ENCODE measurements at regions of chr1 and their contacts with region 1.

Region 1: DNA sequence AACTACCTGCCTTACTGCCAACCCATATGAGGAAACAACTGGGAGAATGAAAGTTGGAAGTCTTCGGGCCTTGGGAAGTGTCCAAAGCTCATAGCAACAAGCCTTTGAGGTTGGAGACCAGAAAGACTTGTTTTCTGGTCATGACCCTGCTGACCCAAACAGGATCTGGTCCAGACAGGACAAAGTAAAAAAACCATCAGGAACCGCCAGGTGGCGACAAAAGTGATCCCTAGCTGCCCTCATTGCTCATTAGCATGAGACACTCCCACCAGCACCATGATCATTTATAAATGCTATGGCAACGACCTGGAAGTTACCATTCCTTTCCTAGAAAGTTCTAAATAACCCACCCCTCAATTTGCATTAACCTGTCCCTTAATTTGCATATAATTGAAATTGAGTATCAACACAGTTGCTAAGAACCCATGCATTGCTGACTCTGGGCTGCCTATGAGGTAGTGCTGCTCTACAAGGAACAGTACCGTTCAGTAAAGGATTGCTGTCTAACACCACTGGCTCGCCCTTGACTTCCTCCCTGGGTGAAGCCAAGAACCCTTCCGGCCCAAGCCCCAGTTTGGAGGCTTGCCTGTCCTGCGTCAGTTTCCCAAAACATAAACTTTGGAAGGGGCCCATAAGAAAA is 89.0 kb downstream of the URB2 start:
- DNase-seq: no peak
- ATAC-seq: peak; percentile 96
- H3K4me3 ChIP-seq: no peak overlapping the region
- H3K27ac ChIP-seq: no peak overlapping the region
- H3K4me1 ChIP-seq: no peaks in the 10 kb centered on the region
- H3K27me3 ChIP-seq: no peaks in the 10 kb centered on the region; a peak in 1 of 4 replicates
- CTCF ChIP-seq: peak; percentile 56 to 68 (median 62)
- EP300 ChIP-seq: no peak
- POLR2A ChIP-seq: no peak
- RAD21 ChIP-seq: peak; percentile 62

Region 2: DNA sequence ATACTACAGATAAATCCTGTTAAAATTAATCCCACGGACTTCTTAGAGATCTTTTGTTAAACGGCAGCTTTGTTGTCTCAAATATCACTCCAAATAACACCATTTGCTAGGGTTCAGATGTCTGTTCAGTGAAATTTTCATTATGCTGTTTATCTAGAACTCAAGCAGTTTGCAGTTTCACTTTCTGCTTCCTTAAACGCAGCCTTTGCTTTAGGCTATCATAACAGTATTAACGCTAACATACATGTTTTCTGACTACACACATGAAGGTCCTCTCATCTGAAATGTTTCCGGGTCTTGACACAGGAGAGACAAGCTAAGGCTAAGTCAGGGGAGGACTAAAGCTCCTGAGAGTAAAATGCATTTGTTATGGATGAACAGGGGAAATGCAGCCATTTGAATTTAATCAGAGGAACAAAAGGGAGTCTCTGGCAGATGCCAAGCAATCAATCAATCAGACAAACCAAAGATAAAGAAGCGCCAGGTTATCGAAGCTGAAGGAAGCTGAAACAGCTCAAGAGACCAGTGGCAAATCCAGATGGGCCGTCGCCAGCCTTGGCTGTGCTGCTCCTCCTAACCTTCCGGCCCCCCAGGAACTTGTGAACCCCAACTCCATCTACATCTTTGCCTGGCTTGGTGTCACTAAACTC is 389.1 kb before region 1 on chr1:
- CTCF ChIA-PET with region 1: no interaction called
- POLR2A ChIA-PET with region 1: no interaction called
- RAD21 ChIA-PET with region 1: no interaction called
- SMC1A ChIA-PET with region 1: no interaction called
- in situ Hi-C with region 1: no loop called
- intact Hi-C with region 1: no loop called
- DNase-seq: no peak
- ATAC-seq: no peak
- H3K4me3 ChIP-seq: no peak overlapping the region
- H3K27ac ChIP-seq: no peak overlapping the region
- H3K4me1 ChIP-seq: peaks cover 26% of the 10 kb centered on the region
- H3K27me3 ChIP-seq: no peaks in the 10 kb centered on the region
- CTCF ChIP-seq: no peak
- EP300 ChIP-seq: no peak
- POLR2A ChIP-seq: no peak
- RAD21 ChIP-seq: no peak

Region 3: DNA sequence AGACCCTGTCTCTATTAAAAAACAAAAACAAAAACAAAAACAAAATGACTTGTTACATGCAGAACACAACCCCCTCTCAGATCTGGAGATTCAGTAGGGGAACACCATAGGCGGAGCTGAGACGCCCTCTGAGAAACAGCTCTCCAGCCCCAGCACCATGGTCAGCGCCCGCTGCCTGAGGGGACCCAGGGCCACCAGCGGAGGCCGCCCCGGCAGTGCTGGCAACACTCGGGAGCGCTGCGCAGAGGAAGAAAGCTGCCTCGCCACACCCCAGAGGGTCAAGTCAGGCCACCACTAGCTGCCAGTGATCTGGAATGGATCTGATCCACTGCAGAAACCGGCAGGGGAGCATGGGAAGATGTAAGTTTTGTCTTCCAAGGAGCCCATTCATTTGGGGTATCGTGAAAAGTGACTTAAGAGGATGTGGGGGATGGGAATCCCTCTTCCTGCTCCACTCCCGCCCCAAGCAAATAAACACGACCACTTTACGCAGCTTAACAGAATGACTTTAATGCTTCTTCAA is 284.3 kb before region 1 on chr1:
- CTCF ChIA-PET with region 1: no interaction called
- POLR2A ChIA-PET with region 1: no interaction called
- RAD21 ChIA-PET with region 1: no interaction called
- SMC1A ChIA-PET with region 1: no interaction called
- in situ Hi-C with region 1: no loop called
- intact Hi-C with region 1: no loop called
- DNase-seq: no peak
- ATAC-seq: peak; percentile 46; the same call in 1 of the 3 replicates
- H3K4me3 ChIP-seq: no peak overlapping the region
- H3K27ac ChIP-seq: no peak overlapping the region
- H3K4me1 ChIP-seq: no peaks in the 10 kb centered on the region
- H3K27me3 ChIP-seq: peaks cover 13 to 14% of the 10 kb centered on the region in 2 experiments
- CTCF ChIP-seq: no peak
- EP300 ChIP-seq: no peak
- POLR2A ChIP-seq: no peak
- RAD21 ChIP-seq: no peak

Region 4: GRCh38 chr1:229730573-229730972 is 15.5 kb after region 1 on chr1:
- CTCF ChIA-PET with region 1: interaction called, 18 read pairs
- POLR2A ChIA-PET with region 1: no interaction called
- RAD21 ChIA-PET with region 1: no interaction called
- SMC1A ChIA-PET with region 1: interaction called, 6 read pairs
- in situ Hi-C with region 1: no loop called
- intact Hi-C with region 1: no loop called
- DNase-seq: no peak
- ATAC-seq: no peak
- H3K4me3 ChIP-seq: no peak overlapping the region
- H3K27ac ChIP-seq: no peak overlapping the region
- H3K4me1 ChIP-seq: no peaks in the 10 kb centered on the region
- H3K27me3 ChIP-seq: no peaks in the 10 kb centered on the region; a peak in 2 of 4 replicates
- CTCF ChIP-seq: no peak
- EP300 ChIP-seq: no peak
- POLR2A ChIP-seq: no peak
- RAD21 ChIP-seq: no peak

Region 5: GRCh38 chr1:229856009-229856650 is 141.0 kb after region 1 on chr1:
- CTCF ChIA-PET with region 1: interaction called, 5 read pairs
- POLR2A ChIA-PET with region 1: no interaction called
- RAD21 ChIA-PET with region 1: no interaction called
- SMC1A ChIA-PET with region 1: interaction called, 3 read pairs
- in situ Hi-C with region 1: no loop called
- intact Hi-C with region 1: loop called (anchors 5 kb)
- DNase-seq: peak; percentile 57
- ATAC-seq: peak; percentile 98
- H3K4me3 ChIP-seq: peak overlapping the region; percentile 71
- H3K27ac ChIP-seq: peak overlapping the region; percentile 81
- H3K4me1 ChIP-seq: peaks cover 11% of the 10 kb centered on the region
- H3K27me3 ChIP-seq: no peaks in the 10 kb centered on the region
- CTCF ChIP-seq: no peak
- EP300 ChIP-seq: 0 out of 4 replicates have a peak, but pooled peaks of 1 of the 2 experiments have one; percentile 11
- POLR2A ChIP-seq: 0 out of 2 replicates have a peak, but pooled peaks have one; percentile 31
- RAD21 ChIP-seq: 0 out of 2 replicates have a peak, but pooled peaks have one; percentile 16

Region 6: GRCh38 chr1:230303822-230304221 is 588.7 kb after region 1 on chr1:
- CTCF ChIA-PET with region 1: interaction called, 12 read pairs
- POLR2A ChIA-PET with region 1: no interaction called
- RAD21 ChIA-PET with region 1: interaction called, 4 read pairs
- SMC1A ChIA-PET with region 1: interaction called, 9 read pairs
- in situ Hi-C with region 1: no loop called
- intact Hi-C with region 1: no loop called
- DNase-seq: no peak
- ATAC-seq: no peak; the same call in 2 of the 3 replicates
- H3K4me3 ChIP-seq: no peak overlapping the region
- H3K27ac ChIP-seq: no peak overlapping the region
- H3K4me1 ChIP-seq: no peaks in the 10 kb centered on the region; the same call in 1 of the 2 replicates
- H3K27me3 ChIP-seq: no peaks in the 10 kb centered on the region
- CTCF ChIP-seq: no peak
- EP300 ChIP-seq: no peak
- POLR2A ChIP-seq: no peak
- RAD21 ChIP-seq: no peak

Region 7: GRCh38 chr1:230310381-230311163 is 595.5 kb after region 1 on chr1:
- CTCF ChIA-PET with region 1: interaction called, 12 read pairs
- POLR2A ChIA-PET with region 1: no interaction called
- RAD21 ChIA-PET with region 1: interaction called, 5 read pairs
- SMC1A ChIA-PET with region 1: interaction called, 9 read pairs
- in situ Hi-C with region 1: loop called (anchors 5 kb)
- intact Hi-C with region 1: loop called (anchors 1 kb)
- DNase-seq: peak; percentile 11
- ATAC-seq: peak; percentile 89
- H3K4me3 ChIP-seq: no peak overlapping the region
- H3K27ac ChIP-seq: no peak overlapping the region
- H3K4me1 ChIP-seq: no peaks in the 10 kb centered on the region; the same call in 1 of the 2 replicates
- H3K27me3 ChIP-seq: no peaks in the 10 kb centered on the region
- CTCF ChIP-seq: peak; percentile 89 to 94 (median 92)
- EP300 ChIP-seq: no peak
- POLR2A ChIP-seq: no peak
- RAD21 ChIP-seq: peak; percentile 99

Measured in GM12878 (cell line).